ENCODE measurements at regions of chr7 and their contacts with region 1.

Region 1: GRCh38 chr7:94368371-94368791 is 26.3 kb upstream of the COL1A2 start:
- DNase-seq: no peak
- H3K4me3 ChIP-seq: peak overlapping the region; percentile 31 to 51
- H3K27ac ChIP-seq: peak overlapping the region; percentile 82 to 85
- H3K4me1 ChIP-seq: peaks cover 8 to 18% of the 10 kb centered on the region in 2 donors
- H3K27me3 ChIP-seq: no peaks in the 10 kb centered on the region
- CTCF ChIP-seq: no peak

Region 2: DNA sequence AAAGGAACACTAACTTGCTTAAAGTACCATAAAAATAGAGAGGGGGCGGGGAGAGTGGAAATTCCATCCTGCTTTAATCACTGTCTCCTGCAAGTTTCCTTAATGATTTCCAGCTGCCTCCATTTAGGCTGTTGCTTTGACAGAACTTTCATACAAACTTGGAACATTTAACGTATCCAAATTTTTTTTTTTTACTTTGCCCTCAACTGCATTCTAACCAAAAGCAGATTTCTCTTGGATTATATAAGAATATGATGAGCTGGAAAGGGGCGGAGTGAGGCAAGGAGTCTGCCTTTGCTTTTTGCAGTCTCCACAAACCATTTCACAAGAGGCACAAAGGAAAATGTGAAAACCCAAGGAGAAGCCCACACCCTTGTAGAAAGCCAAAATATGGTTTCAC is 20.2 kb before region 1 on chr7:
- intact Hi-C with region 1: loop called (anchors 2 kb)
- DNase-seq: peak in 1 of 2 donors; percentile 74
- H3K4me3 ChIP-seq: peak overlapping the region; percentile 20 to 36
- H3K27ac ChIP-seq: peak overlapping the region; percentile 72 to 73
- H3K4me1 ChIP-seq: peaks cover 0 to 18% of the 10 kb centered on the region in 2 donors
- H3K27me3 ChIP-seq: no peaks in the 10 kb centered on the region
- CTCF ChIP-seq: no peak

Region 3: DNA sequence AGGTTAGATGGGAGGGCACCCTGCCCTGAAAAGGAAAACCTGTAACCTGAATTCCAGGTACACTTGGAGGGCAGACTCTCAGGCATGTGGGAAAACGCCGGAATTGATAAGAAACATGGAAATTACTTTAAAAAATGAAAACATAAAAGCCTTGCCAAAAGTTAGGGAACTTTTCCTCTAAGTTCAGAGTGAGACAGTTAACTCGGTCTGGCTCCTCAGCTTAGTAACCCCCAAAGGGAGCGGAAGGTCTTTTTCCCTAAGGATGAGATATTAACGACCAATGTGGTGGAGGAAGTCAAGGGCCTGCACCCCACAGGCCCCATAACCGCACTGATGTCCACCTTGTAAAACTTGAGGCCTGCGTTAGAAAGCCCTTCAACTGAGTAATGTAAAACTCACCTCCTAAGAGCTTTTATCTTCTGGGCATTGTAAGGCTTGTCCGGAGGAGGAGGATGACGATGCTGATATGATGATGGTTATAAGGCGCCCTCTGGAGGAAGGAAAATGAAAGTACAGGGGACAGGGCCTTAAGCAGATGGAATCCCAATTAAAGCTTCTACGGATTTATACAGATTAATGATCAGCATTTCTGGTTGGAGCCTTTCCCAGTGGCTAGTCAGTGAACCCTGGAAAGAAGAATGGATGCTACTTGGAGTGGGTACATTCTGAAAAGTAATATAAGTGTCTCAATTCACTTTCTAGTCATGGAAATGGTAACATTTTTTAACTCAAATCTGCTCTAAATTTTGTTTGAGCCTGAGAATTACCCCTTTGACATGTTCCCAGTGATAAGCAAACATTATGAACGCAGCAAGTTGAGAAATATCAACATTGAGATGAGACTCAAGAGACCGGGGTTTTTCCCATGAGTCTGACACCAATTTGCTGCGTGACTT is 27.0 kb after region 1 on chr7:
- intact Hi-C with region 1: no loop called
- DNase-seq: peak in 1 of 2 donors; percentile 78
- H3K4me3 ChIP-seq: peak overlapping the region; percentile 74 to 80
- H3K27ac ChIP-seq: peak overlapping the region; percentile 91 to 97
- H3K4me1 ChIP-seq: peaks cover 3 to 40% of the 10 kb centered on the region in 2 donors
- H3K27me3 ChIP-seq: no peaks in the 10 kb centered on the region
- CTCF ChIP-seq: peak; percentile 81 to 86 (median 84)

Region 4: GRCh38 chr7:94547126-94547525 is 178.7 kb after region 1 on chr7:
- intact Hi-C with region 1: no loop called
- DNase-seq: no peak
- H3K4me3 ChIP-seq: no peak overlapping the region
- H3K27ac ChIP-seq: no peak overlapping the region
- H3K4me1 ChIP-seq: no peaks in the 10 kb centered on the region
- H3K27me3 ChIP-seq: no peaks in the 10 kb centered on the region
- CTCF ChIP-seq: no peak